ENCODE measurements at regions of chr19 and their contacts with region 1.

Region 1: GRCh38 chr19:1103708-1104310 is at the start of gene GPX4:
- DNase-seq: peak; percentile 99
- ATAC-seq: peak; percentile 82
- H3K4me3 Mint-ChIP-seq: peak within 1 kb of the TSS; percentile 71
- H3K27ac Mint-ChIP-seq: peak within 1 kb of the TSS; percentile 89
- H3K4me1 Mint-ChIP-seq: peaks cover 48% of the 10 kb centered on the region
- H3K27me3 Mint-ChIP-seq: no peaks in the 10 kb centered on the region
- CTCF ChIP-seq: no peak
- total RNA-seq, gene GPX4: 224 to 232 TPM

Region 2: GRCh38 chr19:1082172-1082927 is 21.5 kb before region 1 on chr19:
- CTCF ChIA-PET with region 1: interaction called, 4 read pairs
- POLR2A ChIA-PET with region 1: interaction called, 17 read pairs
- intact Hi-C with region 1: no loop called
- DNase-seq: peak; percentile 94
- ATAC-seq: peak; percentile 77
- H3K4me3 Mint-ChIP-seq: no peak overlapping the region
- H3K27ac Mint-ChIP-seq: no peak overlapping the region
- H3K4me1 Mint-ChIP-seq: peaks cover 53% of the 10 kb centered on the region
- H3K27me3 Mint-ChIP-seq: no peaks in the 10 kb centered on the region
- CTCF ChIP-seq: no peak

Region 3: DNA sequence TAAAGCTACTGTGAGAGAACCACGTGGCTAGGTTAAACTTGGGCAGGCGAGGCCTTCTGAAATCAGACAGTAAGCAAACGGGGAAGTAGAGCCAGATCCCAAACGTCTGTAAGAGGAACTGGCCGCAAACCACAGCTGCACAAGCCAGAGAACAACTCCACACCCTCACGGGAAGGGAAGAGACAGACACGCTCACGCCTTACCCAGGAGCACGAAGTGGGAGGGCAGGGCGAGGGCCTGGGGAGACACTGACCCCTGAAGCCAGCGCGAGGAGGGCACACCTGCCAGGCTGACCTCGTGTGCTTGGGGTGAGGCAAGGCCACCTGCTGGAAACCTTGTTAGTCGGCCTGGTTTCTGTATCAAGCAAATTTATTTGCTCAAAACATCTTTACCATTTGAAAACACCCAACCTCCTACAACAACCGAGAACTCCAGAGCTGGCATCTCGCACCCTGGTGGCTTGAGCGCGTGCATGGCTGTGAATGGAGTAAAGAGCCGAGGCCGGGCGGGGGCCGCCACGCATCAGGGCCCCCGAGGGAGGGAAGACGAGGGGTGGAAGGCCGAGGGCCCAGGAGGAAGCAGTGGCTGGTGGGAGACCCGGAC is 15.9 kb before region 1 on chr19:
- CTCF ChIA-PET with region 1: no interaction called
- POLR2A ChIA-PET with region 1: interaction called, 17 read pairs
- intact Hi-C with region 1: no loop called
- DNase-seq: peak; percentile 55
- ATAC-seq: peak; percentile 15
- H3K4me3 Mint-ChIP-seq: peak overlapping the region; percentile 2
- H3K27ac Mint-ChIP-seq: peak overlapping the region; percentile 84
- H3K4me1 Mint-ChIP-seq: peaks cover 58% of the 10 kb centered on the region
- H3K27me3 Mint-ChIP-seq: no peaks in the 10 kb centered on the region
- CTCF ChIP-seq: no peak

Region 4: DNA sequence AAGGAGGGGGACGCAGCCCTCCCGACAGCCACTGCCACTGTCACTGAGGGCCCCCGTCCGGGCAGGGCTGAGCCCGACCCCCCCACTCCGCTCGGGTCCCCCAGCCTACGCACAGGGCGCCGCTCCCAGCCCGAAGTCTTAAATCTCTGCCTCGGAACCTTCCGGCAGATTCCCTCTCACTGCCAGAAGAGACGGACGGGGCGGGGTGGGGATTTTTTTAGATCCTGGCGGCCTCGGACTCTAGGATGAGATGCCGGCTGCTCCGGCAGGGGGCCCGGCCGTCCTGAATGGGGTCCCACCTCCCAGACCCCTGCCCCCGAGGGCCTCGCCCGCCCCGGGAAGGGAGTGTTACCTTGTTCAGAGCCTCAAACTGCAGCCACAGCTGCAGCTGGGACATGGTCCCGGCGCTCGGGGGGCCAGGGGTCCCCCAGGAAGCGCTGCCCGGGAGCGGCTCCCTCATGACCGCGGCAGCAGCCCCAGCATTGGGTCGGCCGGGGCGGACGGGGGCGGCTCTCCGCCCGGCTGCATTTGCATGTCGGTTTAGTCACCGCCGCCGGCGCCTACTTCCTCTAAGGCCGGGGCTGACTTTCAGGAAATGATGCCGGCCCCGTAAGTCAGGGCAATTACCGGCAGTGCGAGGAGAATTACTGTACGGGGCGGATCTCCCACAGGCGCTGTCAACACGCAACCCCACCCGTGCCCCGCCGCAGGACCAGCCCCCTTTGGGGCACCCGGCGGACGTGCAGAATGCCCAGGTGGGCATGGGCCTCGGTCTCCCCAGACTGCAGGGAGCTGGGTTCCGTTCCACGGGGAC is 28.1 kb after region 1 on chr19:
- CTCF ChIA-PET with region 1: interaction called, 3 read pairs
- POLR2A ChIA-PET with region 1: interaction called, 14 read pairs
- intact Hi-C with region 1: no loop called
- DNase-seq: peak; percentile 96
- ATAC-seq: peak; percentile 70
- H3K4me3 Mint-ChIP-seq: peak overlapping the region; percentile 85
- H3K27ac Mint-ChIP-seq: peak overlapping the region; percentile 94
- H3K4me1 Mint-ChIP-seq: peaks cover 42% of the 10 kb centered on the region
- H3K27me3 Mint-ChIP-seq: no peaks in the 10 kb centered on the region
- CTCF ChIP-seq: no peak

Region 5: GRCh38 chr19:1223018-1223855 is 119.4 kb after region 1 on chr19:
- CTCF ChIA-PET with region 1: no interaction called
- POLR2A ChIA-PET with region 1: no interaction called
- intact Hi-C with region 1: no loop called
- DNase-seq: peak; percentile 62
- ATAC-seq: no peak
- H3K4me3 Mint-ChIP-seq: no peak overlapping the region
- H3K27ac Mint-ChIP-seq: no peak overlapping the region
- H3K4me1 Mint-ChIP-seq: no peaks in the 10 kb centered on the region
- H3K27me3 Mint-ChIP-seq: no peaks in the 10 kb centered on the region
- CTCF ChIP-seq: peak; percentile 39

Region 6: DNA sequence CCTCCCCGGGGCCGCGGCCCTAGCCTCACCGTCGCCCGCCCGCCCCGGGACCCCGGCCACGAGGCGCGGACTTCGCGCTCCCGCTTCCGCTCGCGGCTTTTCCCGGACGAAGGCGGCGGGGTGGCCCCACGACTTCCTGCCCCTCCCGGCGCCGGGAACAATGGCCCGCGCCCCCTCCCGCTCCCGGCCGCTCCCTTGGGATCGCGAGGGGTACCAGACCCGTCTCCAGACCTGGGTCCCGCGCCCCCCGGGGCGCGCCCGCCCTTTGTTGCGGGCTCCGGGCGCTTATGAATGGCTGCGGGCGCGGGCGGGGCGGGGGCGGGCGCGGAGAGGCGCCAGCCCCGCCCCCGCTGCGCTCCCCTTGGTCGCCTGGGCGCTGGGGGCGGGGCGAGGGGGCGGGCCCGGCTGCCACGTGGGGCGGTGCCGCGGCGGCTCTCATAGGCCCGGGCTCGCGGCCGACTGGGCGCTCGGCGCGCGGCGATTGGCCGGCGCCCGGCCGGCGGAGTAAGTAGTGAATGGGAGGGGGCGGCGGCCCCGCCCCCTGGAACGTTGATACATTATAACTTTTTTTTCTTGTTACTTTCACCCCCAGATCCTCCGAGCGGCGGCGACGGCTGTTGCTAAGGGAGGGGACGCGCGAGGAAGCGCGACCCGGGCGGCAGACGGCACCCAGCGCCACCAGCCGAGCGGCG is 145.6 kb after region 1 on chr19:
- CTCF ChIA-PET with region 1: interaction called, 7 read pairs
- POLR2A ChIA-PET with region 1: no interaction called
- intact Hi-C with region 1: loop called (anchors 10 kb)
- DNase-seq: peak; percentile 95
- ATAC-seq: peak; percentile 40
- H3K4me3 Mint-ChIP-seq: peak overlapping the region; percentile 73
- H3K27ac Mint-ChIP-seq: peak overlapping the region; percentile 75
- H3K4me1 Mint-ChIP-seq: peaks cover 10% of the 10 kb centered on the region
- H3K27me3 Mint-ChIP-seq: no peaks in the 10 kb centered on the region
- CTCF ChIP-seq: no peak

Measured in activated CD8-positive, alpha-beta T cell treated with anti-CD3 and anti-CD28 coated beads for 36 hours (primary cell).